ENCODE measurements at regions of chr7 and their contacts with region 1.

Region 1: GRCh38 chr7:46916581-46916980 is 665.3 kb downstream of the TNS3 start:
- DNase-seq: no peak
- ATAC-seq: no peak
- H3K4me3 ChIP-seq: no peak overlapping the region
- H3K27ac ChIP-seq: no peak overlapping the region
- H3K4me1 ChIP-seq: no peaks in the 10 kb centered on the region
- H3K27me3 ChIP-seq: no peaks in the 10 kb centered on the region
- CTCF ChIP-seq: no peak

Region 2: GRCh38 chr7:46928719-46929118 is 12.1 kb after region 1 on chr7:
- CTCF ChIA-PET with region 1: no interaction called
- POLR2A ChIA-PET with region 1: interaction called, 11 read pairs
- in situ Hi-C with region 1: no loop called
- intact Hi-C with region 1: no loop called
- DNase-seq: no peak
- ATAC-seq: no peak
- H3K4me3 ChIP-seq: no peak overlapping the region
- H3K27ac ChIP-seq: no peak overlapping the region; the same call in 1 of the 2 replicates
- H3K4me1 ChIP-seq: peaks cover 13% of the 10 kb centered on the region; the same call in 1 of the 2 replicates
- H3K27me3 ChIP-seq: no peaks in the 10 kb centered on the region
- CTCF ChIP-seq: no peak

Measured in Panc1 (cell line).